ENCODE measurements at regions of chr1 and their contacts with region 1.

Region 1: GRCh38 chr1:25037174-25038074 is 107.3 kb upstream of the RUNX3 start:
- DNase-seq: peak; percentile 13
- ATAC-seq: peak; percentile 61
- H3K4me3 ChIP-seq: no peak overlapping the region
- H3K27ac ChIP-seq: no peak overlapping the region
- H3K4me1 ChIP-seq: no peaks in the 10 kb centered on the region
- H3K27me3 ChIP-seq: no peaks in the 10 kb centered on the region
- CTCF ChIP-seq: peak; percentile 83

Region 2: GRCh38 chr1:24805534-24806301 is 231.7 kb before region 1 on chr1:
- CTCF ChIA-PET with region 1: no interaction called
- POLR2A ChIA-PET with region 1: no interaction called
- in situ Hi-C with region 1: no loop called
- intact Hi-C with region 1: no loop called
- DNase-seq: no peak
- ATAC-seq: no peak
- H3K4me3 ChIP-seq: no peak overlapping the region
- H3K27ac ChIP-seq: no peak overlapping the region
- H3K4me1 ChIP-seq: no peaks in the 10 kb centered on the region
- H3K27me3 ChIP-seq: no peaks in the 10 kb centered on the region
- CTCF ChIP-seq: no peak

Region 3: DNA sequence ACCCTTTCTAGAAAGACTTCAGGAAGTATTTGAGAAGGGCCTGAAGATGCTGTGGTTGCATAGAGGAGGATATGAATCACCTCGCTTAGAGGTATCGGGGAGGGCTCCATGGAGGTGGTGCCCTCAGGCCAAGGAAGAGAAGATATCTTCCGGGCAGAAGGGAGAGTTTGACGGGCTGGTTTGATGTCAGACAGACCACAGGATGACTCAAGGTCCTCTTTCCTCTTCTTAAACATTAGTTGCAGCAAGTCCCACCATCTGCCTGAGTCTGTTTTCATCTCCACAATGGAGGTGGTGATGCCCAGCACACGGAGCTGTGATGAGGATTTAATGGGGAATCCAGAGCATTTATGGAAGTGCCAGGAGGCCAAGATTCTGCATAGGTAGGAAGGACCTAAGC is 82.3 kb before region 1 on chr1:
- CTCF ChIA-PET with region 1: no interaction called
- POLR2A ChIA-PET with region 1: no interaction called
- in situ Hi-C with region 1: no loop called
- intact Hi-C with region 1: no loop called
- DNase-seq: no peak
- ATAC-seq: no peak
- H3K4me3 ChIP-seq: no peak overlapping the region
- H3K27ac ChIP-seq: no peak overlapping the region
- H3K4me1 ChIP-seq: no peaks in the 10 kb centered on the region
- H3K27me3 ChIP-seq: no peaks in the 10 kb centered on the region
- CTCF ChIP-seq: no peak

Region 4: DNA sequence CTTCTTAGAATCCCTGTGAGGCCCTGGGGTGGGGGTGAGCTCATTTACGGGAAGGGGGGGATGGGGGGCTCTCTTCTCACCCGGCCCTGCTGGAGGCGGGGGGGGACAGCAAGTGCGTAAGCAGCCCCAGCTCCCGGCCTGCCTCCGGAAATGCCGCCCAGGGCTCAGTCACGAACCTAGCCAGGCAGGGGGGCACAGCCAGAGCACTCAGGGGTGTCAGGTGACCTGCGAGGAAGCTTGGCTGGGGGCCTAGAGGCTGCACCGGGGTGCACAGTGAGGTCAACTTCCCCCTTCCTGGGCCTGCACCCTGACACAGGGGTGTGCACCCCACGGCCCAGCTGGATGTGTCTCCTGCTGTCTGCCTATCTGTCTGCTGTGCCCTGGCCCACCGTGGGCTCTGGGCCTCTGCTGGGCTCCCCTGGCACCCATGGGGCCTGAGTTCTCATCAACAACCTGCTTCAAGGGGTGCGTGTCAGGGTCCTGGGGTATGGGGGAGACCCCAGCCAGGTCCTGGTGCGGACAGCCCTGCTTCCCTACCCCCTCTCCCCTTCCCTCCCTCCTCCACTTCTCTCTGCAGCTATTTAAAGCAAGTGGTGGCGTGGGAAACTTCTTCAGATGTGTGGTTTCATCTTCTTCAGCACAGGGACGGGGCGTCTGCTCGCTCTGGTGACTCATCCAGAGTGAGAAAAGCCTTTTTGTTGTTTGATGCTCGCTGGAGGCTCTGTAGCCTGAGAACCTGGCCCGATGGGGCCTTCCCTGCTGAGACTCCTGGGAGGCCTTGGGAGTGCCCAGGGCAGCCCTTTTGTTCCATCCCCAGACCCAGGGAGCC is 14.8 kb before region 1 on chr1:
- CTCF ChIA-PET with region 1: no interaction called
- POLR2A ChIA-PET with region 1: no interaction called
- in situ Hi-C with region 1: no loop called
- intact Hi-C with region 1: loop called (anchors 1 kb)
- DNase-seq: no peak
- ATAC-seq: peak; percentile 75
- H3K4me3 ChIP-seq: no peak overlapping the region
- H3K27ac ChIP-seq: no peak overlapping the region
- H3K4me1 ChIP-seq: peaks cover 8% of the 10 kb centered on the region
- H3K27me3 ChIP-seq: no peaks in the 10 kb centered on the region
- CTCF ChIP-seq: no peak

Region 5: DNA sequence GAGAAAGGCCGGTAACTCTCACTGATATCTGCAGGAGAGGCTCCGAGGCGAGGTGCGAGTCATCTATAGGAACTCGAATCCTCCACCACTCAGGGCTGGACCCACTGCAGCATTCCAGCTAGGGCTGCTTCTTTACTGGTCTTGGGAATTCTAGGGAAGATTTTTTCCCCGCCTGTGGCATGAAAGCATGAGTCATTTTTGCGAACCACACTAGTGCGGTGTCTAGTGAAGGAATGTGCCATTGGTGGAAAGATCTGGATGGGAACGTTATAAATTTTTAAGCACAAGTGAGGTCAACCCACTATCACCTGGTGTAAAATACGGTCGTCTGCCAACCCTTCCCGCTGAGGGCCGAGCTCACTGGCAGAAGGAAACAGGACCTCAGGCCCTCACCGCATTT is 145.2 kb after region 1 on chr1:
- CTCF ChIA-PET with region 1: no interaction called
- POLR2A ChIA-PET with region 1: no interaction called
- in situ Hi-C with region 1: no loop called
- intact Hi-C with region 1: no loop called
- DNase-seq: no peak
- ATAC-seq: peak; percentile 53; the same call in 1 of the 2 replicates
- H3K4me3 ChIP-seq: no peak overlapping the region
- H3K27ac ChIP-seq: no peak overlapping the region
- H3K4me1 ChIP-seq: no peaks in the 10 kb centered on the region
- H3K27me3 ChIP-seq: no peaks in the 10 kb centered on the region
- CTCF ChIP-seq: no peak